Sciatic nerve (tissue), 2 donors: ENCODE measurements at regions of chr4 and their contacts with region 1.

Region 1: GRCh38 chr4:153083447-153083947 is 120.7 kb upstream of the TRIM2 start:
- DNase-seq: no peak
- ATAC-seq: peak; percentile 84

Region 2: DNA sequence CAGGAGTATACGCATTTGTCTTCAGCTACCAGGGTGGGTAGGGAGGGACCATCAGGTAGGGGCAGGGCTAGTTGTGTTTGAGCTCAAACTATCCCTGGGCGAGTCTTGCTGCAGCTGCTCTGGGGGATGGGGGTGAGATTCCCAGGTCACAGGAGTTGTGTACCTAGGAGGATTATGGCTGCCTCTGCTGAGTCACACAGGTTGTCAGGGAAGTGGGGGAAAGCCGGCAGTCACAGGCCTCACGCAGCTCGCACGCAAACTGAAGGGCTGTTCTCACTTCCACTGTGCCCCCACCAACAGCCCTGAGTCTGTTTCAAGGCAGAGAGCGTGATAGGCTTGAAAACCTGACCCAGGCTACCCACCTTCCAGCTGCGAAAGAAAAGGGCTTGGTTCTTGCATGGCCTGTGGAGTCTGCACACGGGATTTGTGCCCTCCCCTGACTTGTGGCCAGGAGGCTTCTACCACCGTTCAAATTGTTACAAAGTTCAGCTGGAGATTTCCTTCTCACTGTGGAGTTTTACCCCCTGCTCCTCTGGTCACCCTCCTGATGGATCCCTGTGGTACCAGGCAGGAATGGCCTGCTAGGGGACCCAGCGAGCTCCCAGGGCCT is 239.9 kb before region 1 on chr4:
- intact Hi-C with region 1: loop called (anchors 10 kb)
- DNase-seq: no peak
- ATAC-seq: no peak

Region 3: DNA sequence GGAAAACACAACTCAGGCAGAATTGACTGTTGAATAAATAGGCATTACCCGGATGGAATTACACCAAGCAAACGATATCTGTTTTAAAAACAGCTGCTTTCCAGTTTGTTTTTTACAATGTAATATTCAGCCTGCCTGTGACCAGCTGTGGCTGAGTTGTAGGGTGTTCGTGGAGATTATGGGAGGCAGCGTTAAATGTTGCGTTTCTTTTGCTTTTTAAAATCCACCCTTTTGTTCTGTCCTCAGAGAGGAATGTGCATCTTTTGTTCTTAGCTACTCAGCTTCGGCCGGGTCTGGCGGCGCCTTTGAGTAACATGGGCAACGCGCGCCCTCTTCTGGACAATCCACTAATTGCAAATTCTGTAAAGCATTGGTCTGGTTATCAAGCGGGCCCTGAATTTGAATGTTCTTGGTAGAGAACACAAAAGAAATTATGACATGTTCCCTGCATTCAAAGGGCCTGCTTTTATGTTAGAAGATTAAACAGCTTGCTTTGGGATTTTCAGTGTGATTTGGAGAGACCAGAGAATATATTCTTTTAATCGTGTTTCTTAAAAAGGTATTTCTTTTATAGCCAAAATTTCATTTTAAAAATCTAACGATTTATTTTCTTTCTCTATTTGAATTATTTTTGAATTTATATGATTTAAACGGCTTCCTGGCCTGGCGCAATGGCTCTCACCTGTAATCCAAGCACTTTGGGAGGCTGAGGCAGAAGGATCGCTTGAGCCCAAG is 44.4 kb after region 1 on chr4:
- intact Hi-C with region 1: loop called (anchors 2 kb)
- DNase-seq: peak; percentile 94
- ATAC-seq: peak; percentile 93